Posterior vena cava (tissue), 2 donors: ENCODE measurements at regions of chr20 and their contacts with region 1.

Region 1: GRCh38 chr20:5126512-5127203 is at the start of gene CDS2:
- DNase-seq: peak; percentile 100
- total RNA-seq, gene CDS2: 53.3 to 80.7 TPM

Region 2: DNA sequence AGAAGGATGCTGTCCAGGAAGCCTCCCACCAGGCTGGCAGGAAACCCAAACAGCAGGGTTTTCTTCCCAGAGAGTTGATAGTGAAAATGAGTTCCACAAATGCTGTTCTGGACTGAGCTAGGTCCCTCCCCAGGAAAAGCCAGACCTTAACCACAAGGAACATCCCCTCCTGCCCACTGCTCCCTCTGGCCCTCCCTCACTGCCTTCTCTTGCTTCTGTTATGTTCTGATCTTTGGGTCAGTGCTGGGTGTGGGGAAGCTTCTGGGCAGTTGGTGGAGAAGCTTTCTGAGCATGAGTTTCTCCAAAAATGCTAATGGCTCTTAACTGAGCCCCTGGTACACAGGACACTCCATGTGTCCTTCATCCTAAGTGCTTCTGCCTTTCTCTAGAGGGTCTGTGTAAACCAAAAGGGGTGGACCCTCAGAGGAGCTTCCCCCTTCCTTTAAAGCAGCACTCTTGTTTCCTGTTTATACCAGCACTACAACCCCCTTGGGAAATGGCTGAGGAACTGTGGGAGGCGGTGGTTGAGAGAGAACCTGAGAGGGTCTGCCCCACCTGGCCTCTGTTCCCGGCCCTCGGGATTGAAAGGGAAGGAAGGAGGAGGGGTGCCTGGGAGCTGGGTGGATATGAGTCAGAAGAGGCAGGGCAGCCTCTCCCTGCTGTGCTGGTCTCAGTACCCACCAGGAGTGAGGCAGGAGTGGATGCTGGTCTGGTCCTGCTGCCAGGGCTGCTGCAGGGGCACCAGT is 42.2 kb after region 1 on chr20:
- intact Hi-C with region 1: loop called in 1 of 2 experiments (anchors 5 kb)
- DNase-seq: no peak

Region 3: DNA sequence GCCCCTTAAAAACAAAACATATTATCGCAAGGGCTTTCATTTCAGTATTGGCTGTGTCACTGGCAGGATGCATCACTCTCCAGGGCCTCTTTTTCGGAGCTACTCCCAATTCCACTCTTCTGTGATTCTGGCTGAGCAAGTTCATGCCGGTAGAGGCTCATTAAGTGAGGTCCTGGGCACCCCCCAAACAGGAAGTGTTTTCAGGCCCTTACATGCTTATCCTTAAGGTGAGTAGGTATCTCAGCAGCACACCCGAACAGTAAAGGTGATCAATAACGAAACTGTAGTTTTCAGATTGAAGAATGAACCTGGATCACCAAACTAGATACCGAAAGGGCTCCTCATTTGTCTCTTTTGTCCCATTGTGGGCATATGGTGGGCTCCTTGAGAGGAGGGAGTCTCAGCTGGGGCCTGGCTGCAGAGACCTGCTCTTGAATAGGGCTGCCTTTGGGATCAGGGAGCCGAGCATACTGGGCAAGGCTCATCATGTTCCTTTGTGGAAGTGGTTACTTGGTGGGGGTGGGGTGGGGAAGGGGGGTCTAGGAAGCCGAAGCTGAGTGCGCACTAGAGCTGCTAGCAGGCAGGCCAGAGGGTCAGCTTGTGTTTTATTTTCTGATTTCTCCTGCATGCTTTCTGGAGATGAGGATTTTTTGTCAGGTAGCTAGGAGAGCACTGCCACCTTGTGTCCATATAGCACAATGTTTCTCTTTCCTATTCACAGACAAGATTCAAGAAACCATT is 65.3 kb after region 1 on chr20:
- intact Hi-C with region 1: loop called (anchors 5 kb)
- DNase-seq: no peak